ENCODE measurements at regions of chr12 and their contacts with region 1.

Region 1: GRCh38 chr12:113174461-113175384 is 10.6 kb downstream of the DDX54 start:
- DNase-seq: peak; percentile 70 to 79
- ATAC-seq: peak; percentile 41 to 85 (median 75)
- H3K4me3 ChIP-seq: no peak overlapping the region
- H3K27ac ChIP-seq: no peak overlapping the region
- H3K4me1 ChIP-seq: no peaks in the 10 kb centered on the region
- H3K27me3 ChIP-seq: no peaks in the 10 kb centered on the region
- CTCF ChIP-seq: peak; percentile 94 to 99 (median 99)

Region 2: DNA sequence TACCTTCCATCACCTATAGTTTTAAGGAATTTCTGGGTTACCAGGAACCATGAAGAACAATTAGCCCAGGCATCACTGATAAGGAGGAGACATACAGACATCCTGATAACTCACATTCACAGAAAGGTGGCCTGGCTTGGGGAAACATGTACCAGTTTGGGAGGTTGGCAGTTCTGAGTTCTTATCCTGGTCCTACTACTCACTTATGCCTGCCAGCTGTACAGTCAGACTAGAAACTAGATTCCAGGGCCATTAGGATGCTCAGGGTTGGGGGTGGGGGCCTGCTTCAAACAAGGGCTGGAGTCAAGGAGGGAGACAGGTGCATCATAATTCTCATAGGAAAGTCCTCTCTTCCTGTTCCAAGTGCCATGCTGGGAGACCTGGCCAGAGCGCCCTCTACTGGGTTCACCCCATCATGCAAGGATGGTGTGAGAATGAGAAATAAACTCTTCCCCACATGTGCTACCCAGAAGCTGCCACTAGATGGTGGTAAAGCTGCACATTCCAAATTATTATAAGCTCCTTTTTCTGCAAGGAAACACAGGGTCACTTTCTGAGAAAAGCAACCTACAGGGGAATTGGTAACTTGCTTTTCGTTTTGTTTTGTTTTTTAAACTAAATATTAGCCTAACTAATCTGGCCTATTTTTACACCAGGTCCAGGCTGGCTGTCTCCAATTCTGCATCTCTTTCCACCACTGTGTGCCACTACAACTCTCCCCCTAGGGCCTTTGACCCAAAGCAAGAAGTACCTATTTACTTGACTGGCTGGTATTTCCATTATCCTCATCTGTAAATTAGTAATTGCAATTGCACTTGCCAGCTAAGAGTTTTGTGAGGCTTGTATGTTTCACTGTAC is 182.0 kb before region 1 on chr12:
- intact Hi-C with region 1: loop called in 1 of 10 experiments (anchors 10 kb)
- DNase-seq: peak; percentile 28 to 32
- ATAC-seq: peak in 3 of 8 donors; percentile 16 to 59 (median 42)
- H3K4me3 ChIP-seq: no peak overlapping the region
- H3K27ac ChIP-seq: no peak overlapping the region
- H3K4me1 ChIP-seq: no peaks in the 10 kb centered on the region
- H3K27me3 ChIP-seq: no peaks in the 10 kb centered on the region
- CTCF ChIP-seq: peak; percentile 56 to 94 (median 80)

Region 3: DNA sequence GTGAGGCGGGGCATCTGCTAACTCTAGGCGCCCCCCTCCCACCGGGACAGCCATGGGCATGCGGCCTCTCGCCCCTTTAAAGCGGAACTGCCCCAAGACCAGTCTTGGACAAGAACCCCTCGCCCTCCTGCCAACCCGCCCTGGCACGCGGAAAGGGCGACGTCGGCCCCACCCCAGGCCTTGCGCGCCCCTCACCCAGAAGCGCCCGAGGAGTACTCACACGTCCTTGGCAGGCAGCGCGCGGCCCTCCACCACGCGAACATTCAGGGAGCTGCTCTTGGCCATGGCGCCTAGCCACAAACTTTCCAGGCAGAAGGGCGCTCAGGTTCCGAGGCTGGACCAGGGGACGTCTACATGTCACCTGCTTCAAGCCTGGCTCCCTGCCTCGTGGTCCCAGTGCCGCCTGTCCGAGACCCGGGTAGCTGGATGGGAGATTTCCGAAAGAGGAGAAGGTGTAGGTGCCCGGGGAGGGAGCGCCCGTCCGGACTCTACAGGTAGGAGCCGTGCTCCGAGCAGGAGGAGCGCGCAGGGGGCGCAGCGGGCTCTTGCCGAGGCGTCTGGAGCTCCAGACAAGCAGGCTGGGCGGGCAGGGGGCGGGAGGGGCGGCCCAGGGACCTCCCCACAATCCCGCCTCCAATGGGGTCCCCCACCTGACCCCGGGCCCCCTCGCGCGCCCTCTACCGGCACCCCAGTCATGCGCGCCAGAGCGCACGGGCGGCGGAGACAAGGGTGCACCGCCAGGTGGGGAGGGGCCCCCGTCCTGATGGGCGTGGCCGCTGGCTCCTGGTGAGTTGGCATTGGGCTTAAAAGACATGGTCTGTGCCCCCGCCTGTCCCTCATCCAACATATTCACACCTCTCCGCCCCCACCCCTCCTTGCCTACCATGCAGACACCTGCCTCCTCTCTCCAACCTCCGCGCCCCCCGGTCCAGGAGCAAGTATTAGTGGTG is 39.3 kb before region 1 on chr12 and contains the start of gene RASAL1:
- intact Hi-C with region 1: no loop called
- DNase-seq: no peak
- ATAC-seq: no peak
- H3K4me3 ChIP-seq: peak within 1 kb of the TSS in 1 of 10 donors; percentile 14
- H3K27ac ChIP-seq: no peak within 1 kb of the TSS
- H3K4me1 ChIP-seq: peaks cover 0 to 10% (median 0%) of the 10 kb centered on the region in 9 donors
- H3K27me3 ChIP-seq: peaks cover 0 to 80% (median 52%) of the 10 kb centered on the region in 7 donors
- CTCF ChIP-seq: peak in 5 of 9 donors; percentile 8 to 44 (median 31)
- total RNA-seq, gene RASAL1: not detected

Region 4: DNA sequence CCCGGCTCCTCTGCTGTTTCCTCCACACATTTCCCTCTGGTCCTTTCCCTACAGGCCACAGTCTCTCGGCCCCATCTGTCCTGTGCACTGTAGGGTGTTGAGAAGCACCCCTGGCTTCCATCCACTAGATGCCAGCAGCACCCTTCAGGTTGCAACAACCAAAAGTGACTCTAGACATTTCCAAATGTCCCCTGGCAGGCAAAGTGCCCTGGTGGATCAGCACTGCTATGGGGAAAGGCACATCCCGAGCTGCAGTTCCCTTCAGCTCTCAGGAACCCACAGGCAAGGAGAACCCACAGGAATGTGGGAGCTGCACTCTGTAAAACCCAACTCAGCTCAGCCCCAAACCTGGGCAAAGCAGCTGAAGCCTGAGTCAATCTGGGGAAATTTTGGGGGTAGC is 714.4 kb after region 1 on chr12:
- intact Hi-C with region 1: no loop called
- DNase-seq: no peak
- ATAC-seq: peak in 1 of 8 donors; percentile 33
- H3K4me3 ChIP-seq: no peak overlapping the region
- H3K27ac ChIP-seq: no peak overlapping the region
- H3K4me1 ChIP-seq: no peaks in the 10 kb centered on the region
- H3K27me3 ChIP-seq: no peaks in the 10 kb centered on the region
- CTCF ChIP-seq: no peak

Measured in heart right ventricle (tissue), 16 donors.